ENCODE measurements at regions of chr5 and their contacts with region 1.

Region 1: DNA sequence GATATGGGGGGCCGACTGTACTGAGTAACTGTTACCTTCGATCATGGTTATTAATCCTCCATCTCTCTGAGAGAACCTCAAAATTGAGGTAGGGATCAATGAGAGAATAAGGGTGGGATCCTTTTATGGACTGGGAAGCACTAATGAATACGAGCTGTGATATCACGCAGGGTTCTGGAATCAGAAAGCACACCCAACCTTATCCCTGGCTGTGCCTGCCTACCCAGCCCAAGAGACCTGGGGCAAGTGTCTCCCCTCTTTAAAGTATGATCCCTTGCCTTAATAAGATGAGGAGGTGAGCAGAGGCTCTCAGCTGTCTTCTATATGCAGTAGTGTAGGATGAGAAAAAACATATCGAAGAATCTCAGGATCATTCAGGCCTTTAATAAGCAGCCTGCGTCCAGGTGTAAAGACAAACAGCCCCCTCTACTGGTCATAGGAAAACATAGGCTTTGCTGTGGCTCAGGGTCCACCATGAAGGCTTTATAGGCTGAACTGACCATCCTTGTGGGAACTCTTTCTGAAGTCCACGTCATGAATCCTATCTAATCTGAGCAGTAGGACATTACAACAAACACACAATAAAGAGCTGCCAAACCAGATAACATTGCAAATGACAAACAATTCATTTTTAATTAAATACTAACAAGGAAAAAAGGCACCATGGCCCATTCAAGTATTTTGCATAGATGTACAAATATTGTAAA is 16.8 kb downstream of the NIPAL4 start:
- DNase-seq: peak; percentile 37
- H3K4me3 ChIP-seq: no peak overlapping the region
- H3K27ac ChIP-seq: no peak overlapping the region
- H3K27me3 ChIP-seq: no peaks in the 10 kb centered on the region
- CTCF ChIP-seq: peak; percentile 84

Region 2: GRCh38 chr5:157214861-157215513 is 261.9 kb before region 1 on chr5:
- CTCF ChIA-PET with region 1: no interaction called
- POLR2A ChIA-PET with region 1: no interaction called
- DNase-seq: no peak
- H3K4me3 ChIP-seq: no peak overlapping the region
- H3K27ac ChIP-seq: no peak overlapping the region
- H3K27me3 ChIP-seq: no peaks in the 10 kb centered on the region
- CTCF ChIP-seq: no peak

Region 3: DNA sequence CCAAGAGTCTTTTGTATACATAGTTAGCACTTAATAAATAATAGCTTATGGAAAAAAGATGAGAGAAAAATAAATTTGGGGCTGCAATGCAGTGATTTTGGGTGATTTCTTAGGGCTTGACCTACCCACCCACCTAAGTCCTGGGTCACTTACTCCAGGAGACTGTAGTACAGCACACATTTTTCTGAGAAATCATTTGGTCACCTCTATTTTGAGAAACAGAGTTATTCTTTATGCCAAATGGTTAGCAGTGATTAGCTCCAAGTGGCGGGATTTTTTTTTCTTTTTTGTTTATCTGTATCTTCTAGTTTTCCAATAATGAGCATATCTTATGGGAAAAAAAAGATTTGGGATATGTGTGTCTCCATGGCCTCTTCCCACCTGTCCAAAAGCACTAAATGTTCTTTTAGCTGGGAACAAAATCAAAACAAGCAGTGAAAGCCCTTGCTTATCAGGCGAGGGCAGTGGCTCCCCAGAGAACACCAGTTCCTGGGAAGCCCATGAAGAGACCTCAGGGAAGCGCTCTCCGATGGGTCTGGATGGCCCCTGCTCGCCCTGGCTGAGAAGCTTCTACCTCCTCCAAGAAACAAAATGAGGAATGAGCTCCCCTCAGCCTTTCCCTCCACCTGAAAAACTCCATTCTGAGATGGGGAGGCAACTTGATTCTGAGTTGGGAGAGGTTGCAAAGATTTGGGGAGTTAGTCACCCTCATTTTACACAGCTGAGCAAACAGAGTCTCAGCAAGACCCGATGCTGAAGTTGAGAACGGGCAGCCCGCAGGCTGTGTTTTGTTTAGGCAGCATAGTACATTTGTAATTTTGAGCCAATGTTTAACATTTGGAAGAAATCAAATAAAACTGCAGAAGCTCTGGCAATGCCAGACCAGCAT is 141.1 kb before region 1 on chr5:
- CTCF ChIA-PET with region 1: interaction called, 53 read pairs
- POLR2A ChIA-PET with region 1: no interaction called
- DNase-seq: peak; percentile 44
- H3K4me3 ChIP-seq: no peak overlapping the region
- H3K27ac ChIP-seq: no peak overlapping the region
- H3K27me3 ChIP-seq: no peaks in the 10 kb centered on the region
- CTCF ChIP-seq: no peak

Region 4: GRCh38 chr5:157390551-157391297 is 86.1 kb before region 1 on chr5:
- CTCF ChIA-PET with region 1: interaction called, 20 read pairs
- POLR2A ChIA-PET with region 1: no interaction called
- DNase-seq: peak; percentile 44
- H3K4me3 ChIP-seq: no peak overlapping the region
- H3K27ac ChIP-seq: peak overlapping the region; percentile 57
- H3K27me3 ChIP-seq: no peaks in the 10 kb centered on the region
- CTCF ChIP-seq: no peak

Region 5: DNA sequence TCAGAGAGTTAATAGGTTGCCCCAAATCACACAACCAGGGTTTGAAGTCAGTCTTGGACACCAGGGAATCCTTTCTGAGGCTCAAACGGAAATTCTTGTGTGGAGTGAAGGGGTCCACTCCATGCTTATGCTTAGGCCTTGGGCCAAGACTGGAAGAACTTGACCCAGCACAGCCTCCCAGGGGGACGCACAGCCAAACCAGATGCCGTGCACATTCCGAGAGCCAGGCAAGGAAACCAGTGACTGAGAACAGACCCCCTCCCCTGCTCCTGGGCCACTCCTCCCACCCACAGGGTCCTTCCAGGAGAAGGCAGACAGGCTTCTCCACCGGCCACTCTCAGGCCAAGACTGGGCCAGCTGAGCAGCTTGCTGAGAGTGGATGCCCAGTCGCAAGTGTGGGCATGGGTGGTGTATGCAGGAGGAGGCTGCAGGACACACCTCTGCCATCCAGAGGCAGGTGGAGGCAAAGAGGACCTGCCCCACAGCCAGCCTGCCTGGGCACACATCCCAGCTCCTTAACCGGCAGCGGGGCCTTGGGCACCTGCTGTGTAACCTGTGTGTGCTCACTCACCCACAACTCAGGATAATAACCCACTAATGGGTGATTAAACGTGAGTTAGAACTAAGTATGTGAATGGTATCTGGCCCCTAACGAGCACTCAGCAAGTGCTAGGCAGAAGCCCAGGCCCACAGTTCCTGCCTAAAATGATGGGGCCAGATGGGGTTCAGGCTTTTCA is 21.2 kb after region 1 on chr5:
- CTCF ChIA-PET with region 1: interaction called, 10 read pairs
- POLR2A ChIA-PET with region 1: no interaction called
- DNase-seq: no peak
- H3K4me3 ChIP-seq: no peak overlapping the region
- H3K27ac ChIP-seq: peak overlapping the region; percentile 31
- H3K27me3 ChIP-seq: no peaks in the 10 kb centered on the region
- CTCF ChIP-seq: no peak

Region 6: DNA sequence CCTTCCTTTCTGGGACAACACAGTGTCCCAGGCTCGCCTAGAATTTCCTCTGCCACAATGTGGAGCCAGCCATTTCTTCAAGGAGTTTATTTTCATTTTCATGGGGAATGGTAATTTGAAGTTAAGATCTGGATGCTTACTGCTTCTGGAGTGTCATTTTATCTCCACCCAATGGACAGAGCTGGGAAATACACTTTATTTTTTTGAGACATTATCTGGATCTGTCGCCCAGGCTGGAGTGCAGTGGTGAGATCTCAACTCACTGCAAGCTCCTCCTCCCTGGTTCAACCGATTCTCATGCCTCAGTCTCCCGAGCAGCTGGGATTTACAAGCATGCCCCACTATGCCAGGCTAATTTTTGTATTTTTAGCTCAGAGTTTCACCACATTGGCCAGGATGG is 241.7 kb after region 1 on chr5:
- CTCF ChIA-PET with region 1: interaction called, 53 read pairs
- POLR2A ChIA-PET with region 1: no interaction called
- DNase-seq: no peak
- H3K4me3 ChIP-seq: no peak overlapping the region
- H3K27ac ChIP-seq: no peak overlapping the region
- H3K27me3 ChIP-seq: no peaks in the 10 kb centered on the region
- CTCF ChIP-seq: peak; percentile 69

Region 7: DNA sequence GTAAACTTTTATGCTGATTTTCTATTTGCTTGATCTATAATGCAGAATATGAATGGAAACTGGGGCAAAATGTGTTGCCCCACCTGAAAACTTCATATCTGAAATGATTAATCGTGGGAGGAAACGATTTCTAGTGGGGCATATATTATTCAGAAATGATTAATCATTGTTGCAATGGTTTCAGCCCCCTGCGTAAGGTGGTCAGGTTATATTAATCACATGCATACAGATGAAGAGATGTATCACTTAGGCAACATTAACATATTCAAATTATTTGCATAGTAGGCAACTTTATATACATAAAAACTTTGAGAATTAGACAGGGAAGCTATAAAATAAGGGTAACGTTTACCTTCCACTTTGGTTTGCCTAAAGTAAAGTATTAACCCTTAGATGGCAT is 316.4 kb after region 1 on chr5:
- CTCF ChIA-PET with region 1: no interaction called
- POLR2A ChIA-PET with region 1: no interaction called
- DNase-seq: no peak
- H3K4me3 ChIP-seq: no peak overlapping the region
- H3K27ac ChIP-seq: no peak overlapping the region
- H3K27me3 ChIP-seq: no peaks in the 10 kb centered on the region
- CTCF ChIP-seq: no peak